ENCODE measurements at regions of chr6 and their contacts with region 1.

Region 1: GRCh38 chr6:42901536-42901957 is 14.3 kb upstream of the PTCRA start:
- DNase-seq: peak in 1 of 2 donors; percentile 87
- H3K4me3 ChIP-seq: no peak overlapping the region
- H3K27ac ChIP-seq: no peak overlapping the region
- H3K4me1 ChIP-seq: peaks cover 0 to 18% of the 10 kb centered on the region in 2 donors
- H3K27me3 ChIP-seq: no peaks in the 10 kb centered on the region
- CTCF ChIP-seq: peak; percentile 83 to 92 (median 88)

Region 2: GRCh38 chr6:42661540-42662153 is 239.9 kb before region 1 on chr6:
- intact Hi-C with region 1: loop called (anchors 2 kb)
- DNase-seq: peak in 1 of 2 donors; percentile 90
- H3K4me3 ChIP-seq: no peak overlapping the region
- H3K27ac ChIP-seq: no peak overlapping the region
- H3K4me1 ChIP-seq: no peaks in the 10 kb centered on the region
- H3K27me3 ChIP-seq: no peaks in the 10 kb centered on the region
- CTCF ChIP-seq: peak; percentile 72 to 89 (median 85)

Region 3: DNA sequence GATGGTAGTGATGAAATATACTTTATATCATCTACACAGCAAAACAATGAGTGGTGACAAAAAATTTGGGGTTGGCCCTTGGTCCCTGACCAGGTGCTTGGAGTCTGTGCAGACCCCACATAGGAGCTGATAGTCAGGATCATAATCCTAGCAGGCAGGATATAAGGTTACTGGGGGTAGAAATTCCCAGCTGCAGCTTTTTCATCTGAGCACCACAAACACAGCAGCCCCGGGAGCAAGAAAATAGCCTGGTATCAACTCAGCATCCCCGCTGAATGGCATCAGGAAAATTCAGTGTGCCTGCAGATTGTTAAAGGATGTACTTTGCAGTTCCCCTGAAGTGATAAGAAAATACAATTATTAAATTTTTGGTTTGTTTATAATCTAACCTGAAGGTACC is 49.9 kb before region 1 on chr6:
- intact Hi-C with region 1: no loop called
- DNase-seq: no peak
- H3K4me3 ChIP-seq: no peak overlapping the region
- H3K27ac ChIP-seq: no peak overlapping the region
- H3K4me1 ChIP-seq: no peaks in the 10 kb centered on the region
- H3K27me3 ChIP-seq: no peaks in the 10 kb centered on the region
- CTCF ChIP-seq: no peak

Region 4: GRCh38 chr6:43143235-43144124 is 241.9 kb after region 1 on chr6:
- intact Hi-C with region 1: loop called (anchors 1 kb)
- DNase-seq: peak; percentile 29 to 93
- H3K4me3 ChIP-seq: no peak overlapping the region
- H3K27ac ChIP-seq: peak overlapping the region in 1 of 2 donors; percentile 9
- H3K4me1 ChIP-seq: peaks cover 0 to 3% of the 10 kb centered on the region in 2 donors
- H3K27me3 ChIP-seq: no peaks in the 10 kb centered on the region
- CTCF ChIP-seq: peak; percentile 94 to 97 (median 95)

Region 5: GRCh38 chr6:43842231-43842794 is 940.8 kb after region 1 on chr6:
- intact Hi-C with region 1: no loop called
- DNase-seq: no peak
- H3K4me3 ChIP-seq: no peak overlapping the region
- H3K27ac ChIP-seq: no peak overlapping the region
- H3K4me1 ChIP-seq: no peaks in the 10 kb centered on the region
- H3K27me3 ChIP-seq: no peaks in the 10 kb centered on the region
- CTCF ChIP-seq: no peak

Measured in ascending aorta (tissue), 2 donors.